Naive thymus-derived CD4-positive, alpha-beta T cell (primary cell): ENCODE measurements at regions of chr5 and their contacts with region 1.

Region 1: DNA sequence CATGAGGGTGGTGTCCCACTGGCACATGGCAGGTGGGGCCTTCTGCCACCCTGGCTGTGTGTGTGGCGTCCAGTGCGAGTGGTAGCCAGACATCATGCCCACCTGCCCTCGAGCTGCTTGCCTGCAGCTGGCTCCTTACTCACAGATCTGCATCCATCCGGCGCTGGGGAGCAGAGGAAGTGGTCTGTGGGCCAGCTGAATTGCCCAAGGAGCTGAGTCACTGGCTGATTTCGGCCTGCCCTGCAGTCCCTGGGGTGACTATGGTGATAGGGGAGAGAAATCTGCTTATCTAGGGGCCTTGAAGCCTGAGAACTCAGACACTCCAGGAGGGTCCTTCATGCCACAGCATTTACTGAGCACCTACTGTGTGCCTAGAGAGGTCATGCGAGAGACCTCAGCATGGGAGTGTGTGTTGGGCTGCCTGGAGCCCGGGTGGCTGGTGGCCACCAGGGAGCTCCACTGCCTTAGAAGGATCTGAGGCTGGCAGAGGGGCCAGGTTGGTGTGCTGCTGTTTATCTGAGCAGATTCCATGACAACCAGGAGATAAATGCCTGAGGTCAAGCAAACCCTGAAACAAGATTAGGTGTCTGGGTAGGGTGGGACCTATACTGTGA is 57.1 kb downstream of the SLC22A5 start:
- DNase-seq: peak in 3 of 9 donors; percentile 26 to 71 (median 29)
- ATAC-seq: peak; percentile 63
- H3K4me3 ChIP-seq: peak overlapping the region; percentile 41
- H3K4me3 Mint-ChIP-seq: peak overlapping the region; percentile 60 to 92 (median 75)
- H3K27ac ChIP-seq: peak overlapping the region; percentile 83
- H3K27ac Mint-ChIP-seq: peak overlapping the region; percentile 88 to 99 (median 97)
- H3K4me1 ChIP-seq: peaks cover 97 to 98% of the 10 kb centered on the region in 2 donors
- H3K4me1 Mint-ChIP-seq: peaks cover 78 to 98% (median 97%) of the 10 kb centered on the region in 7 donors
- H3K27me3 ChIP-seq: no peaks in the 10 kb centered on the region
- H3K27me3 Mint-ChIP-seq: no peaks in the 10 kb centered on the region

Region 2: GRCh38 chr5:132437604-132438266 is 11.1 kb after region 1 on chr5:
- CTCF ChIA-PET with region 1: interaction called, 3 read pairs
- POLR2A ChIA-PET with region 1: interaction called, 88 read pairs
- intact Hi-C with region 1: loop called (anchors 1 kb)
- DNase-seq: peak in 8 of 9 donors; percentile 36 to 66 (median 56)
- ATAC-seq: peak; percentile 88
- H3K4me3 ChIP-seq: peak overlapping the region; percentile 25
- H3K4me3 Mint-ChIP-seq: peak overlapping the region; percentile 60 to 79 (median 68)
- H3K27ac ChIP-seq: peak overlapping the region; percentile 67
- H3K27ac Mint-ChIP-seq: peak overlapping the region; percentile 79 to 93 (median 85)
- H3K4me1 ChIP-seq: peaks cover 61 to 86% of the 10 kb centered on the region in 2 donors
- H3K4me1 Mint-ChIP-seq: peaks cover 68 to 96% (median 83%) of the 10 kb centered on the region in 7 donors
- H3K27me3 ChIP-seq: no peaks in the 10 kb centered on the region
- H3K27me3 Mint-ChIP-seq: no peaks in the 10 kb centered on the region

Region 3: GRCh38 chr5:132456296-132457001 is 29.8 kb after region 1 on chr5:
- CTCF ChIA-PET with region 1: interaction called, 24 read pairs
- POLR2A ChIA-PET with region 1: interaction called, 182 read pairs
- intact Hi-C with region 1: loop called (anchors 1 kb)
- DNase-seq: peak in 8 of 9 donors; percentile 55 to 80 (median 70)
- ATAC-seq: peak; percentile 84
- H3K4me3 ChIP-seq: peak overlapping the region; percentile 40
- H3K4me3 Mint-ChIP-seq: peak overlapping the region; percentile 60 to 85 (median 78)
- H3K27ac ChIP-seq: peak overlapping the region; percentile 77
- H3K27ac Mint-ChIP-seq: peak overlapping the region; percentile 93 to 100 (median 99)
- H3K4me1 ChIP-seq: peaks cover 89 to 96% of the 10 kb centered on the region in 2 donors
- H3K4me1 Mint-ChIP-seq: peaks cover 81 to 94% (median 91%) of the 10 kb centered on the region in 7 donors
- H3K27me3 ChIP-seq: no peaks in the 10 kb centered on the region
- H3K27me3 Mint-ChIP-seq: no peaks in the 10 kb centered on the region

Region 4: DNA sequence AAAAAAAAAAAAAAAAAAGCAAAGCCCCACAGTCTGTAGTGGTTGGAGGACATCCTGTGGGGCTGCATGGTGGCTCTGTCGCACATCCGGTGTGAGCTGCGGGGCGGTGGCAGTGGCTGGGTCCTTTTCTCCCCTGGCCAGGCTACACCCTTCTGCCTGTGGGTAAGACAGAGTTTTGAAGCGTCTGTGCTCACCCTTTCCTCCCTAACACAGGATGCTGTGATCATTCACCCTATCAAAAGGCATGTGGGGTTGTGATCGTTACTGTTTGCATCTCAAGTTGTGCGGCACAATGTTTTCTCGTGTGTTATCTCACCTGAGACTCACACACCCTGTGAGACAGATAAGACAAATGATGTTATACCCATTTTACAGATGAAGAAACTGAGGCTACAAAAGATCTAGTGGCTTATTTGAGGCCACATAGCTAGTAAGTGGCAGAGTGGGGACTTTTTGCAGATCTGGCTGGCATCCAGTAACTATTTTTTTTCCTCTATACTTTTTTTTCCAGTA is 46.4 kb after region 1 on chr5:
- CTCF ChIA-PET with region 1: interaction called, 7 read pairs
- POLR2A ChIA-PET with region 1: interaction called, 150 read pairs
- intact Hi-C with region 1: loop called (anchors 1 kb)
- DNase-seq: peak; percentile 53 to 93 (median 88)
- ATAC-seq: peak; percentile 85
- H3K4me3 ChIP-seq: no peak overlapping the region
- H3K4me3 Mint-ChIP-seq: peak overlapping the region in 9 of 10 donors; percentile 2 to 77 (median 68)
- H3K27ac ChIP-seq: peak overlapping the region; percentile 62
- H3K27ac Mint-ChIP-seq: peak overlapping the region; percentile 89 to 97 (median 96)
- H3K4me1 ChIP-seq: peaks cover 48 to 88% of the 10 kb centered on the region in 2 donors
- H3K4me1 Mint-ChIP-seq: peaks cover 45 to 89% (median 87%) of the 10 kb centered on the region in 7 donors
- H3K27me3 ChIP-seq: no peaks in the 10 kb centered on the region
- H3K27me3 Mint-ChIP-seq: no peaks in the 10 kb centered on the region

Region 5: DNA sequence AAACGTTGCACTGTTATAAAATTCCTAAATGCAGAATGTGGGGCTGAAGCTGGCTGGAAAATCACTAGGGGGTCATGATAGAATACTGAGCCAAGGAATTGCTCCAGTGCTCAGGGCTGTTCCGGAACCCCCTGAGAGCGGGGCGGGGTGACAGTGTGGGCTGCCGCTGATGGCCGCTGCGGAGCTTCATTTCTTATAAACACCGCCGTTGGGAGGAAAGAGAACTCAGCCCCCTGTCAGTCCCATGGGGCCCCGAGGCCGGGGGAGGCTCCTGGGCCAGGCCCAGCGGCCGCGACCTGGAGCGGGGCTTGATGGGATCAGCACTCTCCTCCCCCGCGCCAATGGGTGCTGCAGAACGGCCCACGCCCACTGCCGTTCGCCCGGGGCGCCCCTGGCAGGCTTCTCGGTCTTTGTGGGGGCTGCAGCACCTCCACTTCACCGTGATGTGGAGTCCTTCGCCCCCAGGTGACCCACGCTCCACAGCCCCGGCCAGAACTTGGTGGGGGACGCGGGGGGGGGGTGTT is 69.1 kb after region 1 on chr5:
- CTCF ChIA-PET with region 1: interaction called, 27 read pairs
- POLR2A ChIA-PET with region 1: interaction called, 132 read pairs
- intact Hi-C with region 1: loop called (anchors 1 to 2 kb)
- DNase-seq: peak in 7 of 9 donors; percentile 42 to 79 (median 54)
- ATAC-seq: peak; percentile 48
- H3K4me3 ChIP-seq: peak overlapping the region; percentile 91
- H3K4me3 Mint-ChIP-seq: peak overlapping the region; percentile 86 to 99 (median 97)
- H3K27ac ChIP-seq: peak overlapping the region; percentile 99
- H3K27ac Mint-ChIP-seq: peak overlapping the region; percentile 90 to 99 (median 97)
- H3K4me1 ChIP-seq: peaks cover 48 to 57% of the 10 kb centered on the region in 2 donors
- H3K4me1 Mint-ChIP-seq: peaks cover 36 to 79% (median 68%) of the 10 kb centered on the region in 7 donors
- H3K27me3 ChIP-seq: no peaks in the 10 kb centered on the region
- H3K27me3 Mint-ChIP-seq: no peaks in the 10 kb centered on the region